Astrocyte of the cerebellum (primary cell): ENCODE measurements at regions of chr2 and their contacts with region 1.

Region 1: DNA sequence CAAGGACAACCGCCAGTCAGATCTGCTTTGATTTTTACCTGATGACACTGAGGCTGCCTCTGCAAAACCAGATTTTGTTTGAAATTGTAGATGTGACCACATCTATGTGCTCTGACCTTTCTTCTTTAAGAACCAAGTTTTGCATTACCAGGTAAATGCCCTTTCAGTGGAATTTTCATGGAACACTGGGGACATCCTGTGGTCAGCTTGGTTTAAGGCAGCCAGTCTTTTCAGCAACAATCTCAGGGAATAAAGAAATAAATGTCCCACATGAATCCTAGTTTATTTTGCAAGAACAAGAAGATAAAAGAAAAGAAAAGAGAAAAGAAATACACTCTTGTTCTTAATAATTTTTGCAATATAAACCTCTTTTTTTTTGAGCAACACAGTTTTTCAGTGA is 90.6 kb downstream of the POU3F3 start:
- DNase-seq: peak; percentile 44
- H3K4me3 ChIP-seq: no peak overlapping the region
- CTCF ChIP-seq: peak; percentile 72

Region 2: GRCh38 chr2:104880076-104880475 is 64.4 kb before region 1 on chr2:
- in situ Hi-C with region 1: loop called (anchors 5 kb)
- DNase-seq: no peak
- H3K4me3 ChIP-seq: no peak overlapping the region
- CTCF ChIP-seq: no peak